CD8-positive, alpha-beta memory T cell (primary cell): ENCODE measurements at regions of chr4 and their contacts with region 1.

Region 1: DNA sequence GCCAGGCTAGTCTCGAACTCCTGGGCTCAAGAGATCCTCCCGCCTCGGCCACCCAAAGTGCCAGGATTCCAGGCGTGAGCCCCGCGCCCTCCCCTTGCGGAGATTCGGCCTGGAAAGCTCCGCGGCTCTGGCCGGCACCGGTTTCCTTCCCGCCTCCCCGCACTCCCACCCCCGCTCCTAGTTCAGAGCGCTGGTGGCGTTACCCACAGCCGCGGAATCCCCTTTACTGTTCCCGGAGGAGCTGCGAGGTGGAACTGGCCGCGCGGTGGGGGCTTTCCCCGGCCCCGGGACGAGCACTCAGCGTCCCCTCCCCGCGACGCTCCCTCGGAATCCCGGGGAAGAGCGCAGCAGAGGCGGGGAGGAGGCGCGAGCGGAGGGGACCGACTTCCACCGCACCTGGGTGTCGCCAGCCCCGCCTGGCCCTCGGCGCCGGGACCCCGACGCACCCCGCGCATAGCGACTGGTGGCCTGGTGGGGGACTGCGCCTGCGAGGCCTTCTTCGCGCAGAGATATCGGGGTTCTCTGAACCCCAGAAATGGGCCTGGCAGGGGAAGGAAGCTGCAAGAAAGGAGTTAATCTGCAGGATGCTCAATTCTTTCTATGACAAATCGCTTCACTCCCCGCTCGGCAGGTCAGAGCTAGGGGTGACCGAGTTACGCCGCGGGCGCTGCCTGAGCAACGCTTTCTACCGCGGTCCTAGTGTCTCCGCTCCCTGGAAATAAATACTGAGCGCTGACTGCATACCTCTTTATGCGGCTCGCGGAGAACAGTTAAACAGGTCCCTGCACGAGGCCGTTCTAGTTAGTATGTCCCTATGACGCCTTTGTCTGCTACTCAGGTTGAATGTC is 14.6 kb upstream of the SLC25A4 start:
- DNase-seq: peak in 4 of 5 donors; percentile 6 to 52 (median 23)
- H3K4me3 ChIP-seq: peak overlapping the region; percentile 62
- H3K4me3 Mint-ChIP-seq: peak overlapping the region; percentile 74 to 90 (median 82)
- H3K27ac ChIP-seq: no peak overlapping the region
- H3K27ac Mint-ChIP-seq: no peak overlapping the region
- H3K4me1 ChIP-seq: no peaks in the 10 kb centered on the region
- H3K4me1 Mint-ChIP-seq: peaks cover 7 to 11% (median 8%) of the 10 kb centered on the region in 3 donors
- H3K27me3 ChIP-seq: peaks cover 9% of the 10 kb centered on the region
- H3K27me3 Mint-ChIP-seq: peaks cover 28 to 42% of the 10 kb centered on the region in 2 donors

Region 2: DNA sequence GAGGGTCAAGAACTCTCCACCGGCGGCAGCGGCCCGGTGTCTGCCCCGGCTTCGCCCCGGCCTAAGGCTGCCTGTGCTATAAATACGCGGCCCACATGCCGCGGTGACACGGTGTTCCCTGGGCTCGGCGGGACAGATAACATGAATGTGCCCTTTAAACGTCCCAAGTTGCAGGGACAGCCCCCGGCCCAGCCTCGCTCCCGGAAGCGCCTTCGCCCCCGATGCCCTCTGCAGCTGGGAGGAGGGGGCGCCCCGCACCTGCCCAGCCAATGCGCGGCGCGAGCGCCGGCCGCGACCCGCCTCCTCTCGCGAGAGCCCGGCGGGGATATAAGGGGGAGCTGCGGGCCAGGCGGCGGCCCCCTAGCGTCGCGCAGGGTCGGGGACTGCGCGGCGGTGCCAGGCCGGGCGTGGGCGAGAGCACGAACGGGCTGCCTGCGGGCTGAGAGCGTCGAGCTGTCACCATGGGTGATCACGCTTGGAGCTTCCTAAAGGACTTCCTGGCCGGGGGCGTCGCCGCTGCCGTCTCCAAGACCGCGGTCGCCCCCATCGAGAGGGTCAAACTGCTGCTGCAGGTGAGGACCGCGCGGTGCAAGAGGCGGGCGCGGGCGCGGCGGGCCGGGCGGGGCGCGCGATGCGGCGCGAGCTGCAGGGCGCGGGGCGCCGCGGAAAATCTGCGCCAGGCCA is 14.6 kb after region 1 on chr4 and contains the start of gene SLC25A4:
- CTCF ChIA-PET with region 1: interaction called, 15 read pairs
- POLR2A ChIA-PET with region 1: interaction called, 3 read pairs
- DNase-seq: peak; percentile 79 to 92 (median 87)
- H3K4me3 ChIP-seq: peak within 1 kb of the TSS; percentile 74
- H3K4me3 Mint-ChIP-seq: peak within 1 kb of the TSS; percentile 90 to 93 (median 92)
- H3K27ac ChIP-seq: peak within 1 kb of the TSS; percentile 46
- H3K27ac Mint-ChIP-seq: peak within 1 kb of the TSS; percentile 79 to 92 (median 89)
- H3K4me1 ChIP-seq: peaks cover 8% of the 10 kb centered on the region
- H3K4me1 Mint-ChIP-seq: peaks cover 19 to 29% (median 25%) of the 10 kb centered on the region in 3 donors
- H3K27me3 ChIP-seq: no peaks in the 10 kb centered on the region
- H3K27me3 Mint-ChIP-seq: peaks cover 2 to 11% of the 10 kb centered on the region in 2 donors
- total RNA-seq, gene SLC25A4: 11.8 to 12.6 TPM